Psoas muscle (tissue), 8 donors: ENCODE measurements at regions of chrX and their contacts with region 1.

Region 1: GRCh38 chrX:13048280-13048679 is 3.9 kb upstream of the FAM9C start:
- DNase-seq: no peak
- ATAC-seq: no peak
- H3K4me3 ChIP-seq: no peak overlapping the region
- H3K27ac ChIP-seq: no peak overlapping the region
- H3K4me1 ChIP-seq: no peaks in the 10 kb centered on the region
- H3K27me3 ChIP-seq: no peaks in the 10 kb centered on the region
- CTCF ChIP-seq: no peak

Region 2: GRCh38 chrX:13101441-13102139 is 53.3 kb after region 1 on chrX:
- intact Hi-C with region 1: no loop called
- DNase-seq: peak; percentile 56 to 71
- ATAC-seq: peak; percentile 56 to 88 (median 82)
- H3K4me3 ChIP-seq: no peak overlapping the region
- H3K27ac ChIP-seq: peak overlapping the region; percentile 46
- H3K4me1 ChIP-seq: peaks cover 4% of the 10 kb centered on the region
- H3K27me3 ChIP-seq: no peaks in the 10 kb centered on the region
- CTCF ChIP-seq: no peak

Region 3: GRCh38 chrX:13276991-13277390 is 228.7 kb after region 1 on chrX:
- intact Hi-C with region 1: no loop called
- DNase-seq: no peak
- ATAC-seq: no peak
- H3K4me3 ChIP-seq: no peak overlapping the region
- H3K27ac ChIP-seq: no peak overlapping the region
- H3K4me1 ChIP-seq: no peaks in the 10 kb centered on the region
- H3K27me3 ChIP-seq: peaks cover 0 to 18% (median 0%) of the 10 kb centered on the region in 3 donors
- CTCF ChIP-seq: no peak

Region 4: GRCh38 chrX:13473442-13474163 is 425.3 kb after region 1 on chrX:
- intact Hi-C with region 1: loop called in 1 of 2 experiments (anchors 10 kb)
- DNase-seq: no peak
- ATAC-seq: peak in 1 of 4 donors; percentile 36
- H3K4me3 ChIP-seq: no peak overlapping the region
- H3K27ac ChIP-seq: peak overlapping the region; percentile 51
- H3K4me1 ChIP-seq: no peaks in the 10 kb centered on the region
- H3K27me3 ChIP-seq: no peaks in the 10 kb centered on the region
- CTCF ChIP-seq: no peak